A673 (cell line): ENCODE measurements at regions of chr2 and their contacts with region 1.

Region 1: GRCh38 chr2:42663106-42663780 is 94.8 kb downstream of the MTA3 start:
- DNase-seq: peak; percentile 83
- H3K4me3 ChIP-seq: no peak overlapping the region
- H3K27ac ChIP-seq: no peak overlapping the region
- H3K4me1 ChIP-seq: peaks cover 4% of the 10 kb centered on the region
- H3K27me3 ChIP-seq: no peaks in the 10 kb centered on the region
- CTCF ChIP-seq: peak; percentile 99

Region 2: DNA sequence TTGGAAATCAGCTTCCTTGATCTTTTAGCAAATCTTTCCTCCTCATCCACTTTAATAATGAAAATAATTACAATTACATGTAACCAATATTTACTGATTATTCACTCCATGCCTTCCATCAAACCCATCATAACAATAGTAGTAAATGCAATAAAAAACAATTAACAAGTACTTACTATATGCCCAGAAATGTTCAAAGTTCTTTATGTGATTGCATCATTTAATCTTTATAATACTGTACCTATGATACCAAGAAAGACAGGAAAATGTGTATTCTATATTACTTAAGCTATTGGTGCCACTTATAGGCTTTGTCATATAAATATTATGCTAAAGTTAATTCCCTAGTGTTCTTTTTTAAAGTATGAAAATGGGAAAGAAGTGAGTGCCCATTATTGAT is 825.6 kb before region 1 on chr2:
- CTCF ChIA-PET with region 1: no interaction called
- POLR2A ChIA-PET with region 1: interaction called, 21 read pairs
- intact Hi-C with region 1: no loop called
- DNase-seq: no peak
- H3K4me3 ChIP-seq: no peak overlapping the region
- H3K27ac ChIP-seq: no peak overlapping the region
- H3K4me1 ChIP-seq: peaks cover 4% of the 10 kb centered on the region
- H3K27me3 ChIP-seq: peaks cover 46% of the 10 kb centered on the region
- CTCF ChIP-seq: no peak

Region 3: DNA sequence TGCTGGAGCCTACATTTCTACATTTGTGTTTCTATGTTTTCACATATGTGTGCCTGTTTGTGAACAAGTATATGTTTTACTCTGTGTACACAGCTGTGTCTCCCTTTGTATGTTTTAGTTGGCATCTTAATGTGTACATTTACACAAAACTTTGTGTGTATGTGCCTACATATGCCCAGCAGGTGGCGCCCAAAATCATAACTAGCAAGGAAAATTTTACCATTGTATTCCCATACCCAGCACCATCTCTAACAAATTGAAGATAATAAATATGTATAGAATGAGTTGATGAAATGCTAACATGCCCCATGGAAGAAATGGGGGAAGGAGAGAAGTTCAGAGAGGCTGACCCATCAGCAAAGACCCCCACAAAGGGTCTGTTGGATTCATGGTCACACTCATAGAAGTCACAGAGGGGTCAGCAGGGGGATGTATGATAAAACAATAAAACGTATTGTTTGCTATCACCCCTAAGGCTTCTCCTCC is 567.3 kb before region 1 on chr2:
- CTCF ChIA-PET with region 1: no interaction called
- POLR2A ChIA-PET with region 1: no interaction called
- intact Hi-C with region 1: loop called (anchors 5 kb)
- DNase-seq: peak; percentile 87
- H3K4me3 ChIP-seq: no peak overlapping the region
- H3K27ac ChIP-seq: no peak overlapping the region
- H3K4me1 ChIP-seq: peaks cover 7% of the 10 kb centered on the region
- H3K27me3 ChIP-seq: no peaks in the 10 kb centered on the region
- CTCF ChIP-seq: peak; percentile 90

Region 4: DNA sequence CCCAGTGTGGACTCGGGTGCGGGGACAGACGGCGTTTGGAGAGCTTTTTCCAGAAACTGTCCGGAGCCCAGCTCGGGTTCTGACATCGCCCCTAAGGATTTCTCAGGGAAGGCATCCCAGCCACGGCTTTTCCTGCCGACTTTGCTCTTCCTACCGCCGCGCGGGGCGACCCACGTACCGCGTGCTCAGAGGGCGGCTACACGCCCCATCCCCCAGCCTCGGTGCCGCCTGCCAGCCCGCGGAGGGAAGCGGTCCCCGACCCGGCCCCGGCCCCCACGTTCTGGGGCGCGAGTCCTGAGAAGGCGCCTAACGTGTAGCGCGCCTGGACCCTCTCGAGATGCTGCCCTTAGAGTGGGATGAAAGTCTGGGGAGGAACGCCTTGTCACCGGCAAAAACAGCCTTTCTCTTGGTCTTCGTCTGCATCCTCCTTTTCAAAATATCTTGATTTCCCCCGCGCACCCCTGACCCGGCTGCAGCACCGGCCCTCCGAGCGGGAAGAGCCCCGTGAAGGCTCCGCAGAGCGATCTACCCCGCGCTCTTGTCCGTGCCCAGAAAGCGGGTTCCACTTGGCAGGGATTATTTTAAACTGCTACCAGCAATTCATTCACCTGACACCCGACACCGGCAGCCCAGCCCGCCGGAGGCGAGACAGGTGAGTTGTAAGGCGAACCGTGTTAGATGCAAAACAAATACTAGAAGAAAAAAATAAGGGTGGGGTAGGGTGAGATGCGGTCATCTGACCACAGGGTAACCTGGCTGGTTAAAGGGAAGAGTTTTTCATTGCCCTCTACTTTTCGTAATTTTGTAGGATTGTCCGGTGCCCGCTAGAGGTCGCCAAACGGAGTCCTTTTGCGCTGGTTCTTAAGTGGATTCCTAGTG is 168.6 kb before region 1 on chr2:
- CTCF ChIA-PET with region 1: no interaction called
- POLR2A ChIA-PET with region 1: no interaction called
- intact Hi-C with region 1: loop called (anchors 1 kb)
- DNase-seq: peak; percentile 83
- H3K4me3 ChIP-seq: peak overlapping the region; percentile 62
- H3K27ac ChIP-seq: no peak overlapping the region
- H3K4me1 ChIP-seq: no peaks in the 10 kb centered on the region
- H3K27me3 ChIP-seq: no peaks in the 10 kb centered on the region
- CTCF ChIP-seq: peak; percentile 95

Region 5: GRCh38 chr2:42706836-42707235 is 43.6 kb after region 1 on chr2:
- CTCF ChIA-PET with region 1: interaction called, 20 read pairs
- POLR2A ChIA-PET with region 1: interaction called, 3 read pairs
- intact Hi-C with region 1: no loop called
- DNase-seq: no peak
- H3K4me3 ChIP-seq: no peak overlapping the region
- H3K27ac ChIP-seq: no peak overlapping the region
- H3K4me1 ChIP-seq: no peaks in the 10 kb centered on the region
- H3K27me3 ChIP-seq: no peaks in the 10 kb centered on the region
- CTCF ChIP-seq: no peak